Mammary epithelial cell (primary cell): ENCODE measurements at regions of chr7 and their contacts with region 1.

Region 1: GRCh38 chr7:111741811-111742240 is 179.5 kb upstream of the IMMP2L start:
- DNase-seq: peak; percentile 60
- H3K4me3 ChIP-seq: no peak overlapping the region
- H3K27ac ChIP-seq: no peak overlapping the region
- H3K4me1 ChIP-seq: no peaks in the 10 kb centered on the region
- H3K27me3 ChIP-seq: no peaks in the 10 kb centered on the region
- CTCF ChIP-seq: peak; percentile 67 to 77

Region 2: GRCh38 chr7:111098011-111098925 is 643.6 kb before region 1 on chr7:
- CTCF ChIA-PET with region 1: no interaction called
- dilution Hi-C with region 1: no loop called
- in situ Hi-C with region 1: loop called in 1 of 2 experiments (anchors 25 kb)
- intact Hi-C with region 1: no loop called
- DNase-seq: no peak
- H3K4me3 ChIP-seq: no peak overlapping the region
- H3K27ac ChIP-seq: no peak overlapping the region
- H3K4me1 ChIP-seq: no peaks in the 10 kb centered on the region
- H3K27me3 ChIP-seq: no peaks in the 10 kb centered on the region
- CTCF ChIP-seq: peak; percentile 47 to 59

Region 3: DNA sequence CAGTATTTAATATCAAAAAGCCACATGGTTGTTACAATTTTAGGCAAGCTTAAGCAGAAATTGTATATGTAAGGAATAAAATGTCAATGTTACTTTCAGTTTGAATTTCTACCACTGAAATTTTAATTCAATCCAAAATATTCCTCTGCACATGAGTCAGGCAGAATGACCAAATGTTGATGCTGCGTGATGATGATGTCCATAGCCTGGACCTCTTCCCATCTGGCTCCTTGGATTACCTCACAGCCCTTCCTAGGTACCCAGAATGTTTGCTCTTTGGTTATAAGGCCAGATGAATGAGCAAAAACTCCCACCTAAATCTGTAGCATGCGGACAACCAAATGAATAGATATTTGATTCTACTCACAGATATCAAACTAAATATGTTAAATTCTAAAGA is 78.8 kb after region 1 on chr7:
- CTCF ChIA-PET with region 1: no interaction called
- dilution Hi-C with region 1: no loop called
- in situ Hi-C with region 1: no loop called
- intact Hi-C with region 1: no loop called
- DNase-seq: no peak
- H3K4me3 ChIP-seq: no peak overlapping the region
- H3K27ac ChIP-seq: no peak overlapping the region
- H3K4me1 ChIP-seq: no peaks in the 10 kb centered on the region
- H3K27me3 ChIP-seq: no peaks in the 10 kb centered on the region
- CTCF ChIP-seq: no peak

Region 4: GRCh38 chr7:111855161-111855856 is 113.5 kb after region 1 on chr7:
- CTCF ChIA-PET with region 1: no interaction called
- dilution Hi-C with region 1: no loop called
- in situ Hi-C with region 1: no loop called
- intact Hi-C with region 1: loop called (anchors 1 kb)
- DNase-seq: peak; percentile 48
- H3K4me3 ChIP-seq: no peak overlapping the region
- H3K27ac ChIP-seq: no peak overlapping the region
- H3K4me1 ChIP-seq: no peaks in the 10 kb centered on the region
- H3K27me3 ChIP-seq: no peaks in the 10 kb centered on the region
- CTCF ChIP-seq: peak; percentile 68 to 86

Region 5: DNA sequence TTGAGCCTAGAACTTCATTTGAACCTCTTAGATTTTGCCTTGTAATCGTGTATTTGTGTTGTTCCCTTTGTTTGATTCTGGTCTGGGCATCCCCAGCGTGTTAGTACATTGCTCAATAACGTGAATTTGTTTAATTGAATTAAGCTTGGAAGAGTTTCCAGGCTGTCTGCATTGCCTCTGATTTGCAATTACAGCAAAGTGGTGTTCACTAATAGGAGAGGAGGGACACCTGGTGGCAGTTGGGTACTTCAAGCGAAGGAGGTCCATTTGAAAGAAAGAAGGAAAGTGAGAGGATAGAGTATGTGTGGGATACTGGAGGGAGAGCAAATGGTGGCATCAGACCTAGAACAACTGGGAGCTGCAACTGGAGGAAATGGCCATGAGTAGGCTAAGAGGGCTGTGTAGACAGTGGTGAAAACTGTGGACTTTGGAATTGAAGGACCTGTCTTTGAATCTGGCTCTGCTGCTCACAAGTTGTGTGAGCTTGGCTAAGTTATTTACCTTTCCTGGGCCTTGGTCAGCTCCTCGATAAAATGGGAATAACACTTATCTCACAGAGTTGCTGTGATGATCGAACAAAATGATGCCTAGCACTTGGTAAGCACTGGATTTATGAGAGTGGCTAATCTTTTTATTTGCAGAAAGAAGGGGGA is 754.1 kb after region 1 on chr7:
- CTCF ChIA-PET with region 1: interaction called, 4 read pairs
- dilution Hi-C with region 1: no loop called
- in situ Hi-C with region 1: loop called (anchors 10 kb)
- intact Hi-C with region 1: loop called (anchors 1 kb)
- DNase-seq: peak; percentile 64
- H3K4me3 ChIP-seq: no peak overlapping the region
- H3K27ac ChIP-seq: no peak overlapping the region
- H3K4me1 ChIP-seq: peaks cover 4% of the 10 kb centered on the region
- H3K27me3 ChIP-seq: no peaks in the 10 kb centered on the region
- CTCF ChIP-seq: peak; percentile 57 to 77

Region 6: GRCh38 chr7:113086431-113086888 is 1344.6 kb after region 1 on chr7 and contains the start of gene GPR85:
- CTCF ChIA-PET with region 1: interaction called, 10 read pairs
- dilution Hi-C with region 1: no loop called
- in situ Hi-C with region 1: no loop called
- intact Hi-C with region 1: no loop called
- DNase-seq: peak; percentile 28
- H3K4me3 ChIP-seq: peak within 1 kb of the TSS; percentile 55 to 70 (median 56)
- H3K27ac ChIP-seq: no peak within 1 kb of the TSS
- H3K4me1 ChIP-seq: peaks cover 11% of the 10 kb centered on the region
- H3K27me3 ChIP-seq: peaks cover 4% of the 10 kb centered on the region
- CTCF ChIP-seq: no peak
- total RNA-seq, gene GPR85: 1.1 to 2.2 TPM